ENCODE measurements at regions of chr2 and their contacts with region 1.

Region 1: GRCh38 chr2:147937744-147938349 is 82.7 kb downstream of the ORC4 start:
- DNase-seq: no peak
- ATAC-seq: peak in 1 of 2 donors; percentile 64
- H3K4me3 ChIP-seq: no peak overlapping the region
- H3K27ac ChIP-seq: no peak overlapping the region
- H3K4me1 ChIP-seq: peaks cover 1 to 3% of the 10 kb centered on the region in 2 donors
- H3K27me3 ChIP-seq: no peaks in the 10 kb centered on the region
- CTCF ChIP-seq: peak; percentile 73 to 89 (median 80)
- POLR2A ChIP-seq: no peak

Region 2: DNA sequence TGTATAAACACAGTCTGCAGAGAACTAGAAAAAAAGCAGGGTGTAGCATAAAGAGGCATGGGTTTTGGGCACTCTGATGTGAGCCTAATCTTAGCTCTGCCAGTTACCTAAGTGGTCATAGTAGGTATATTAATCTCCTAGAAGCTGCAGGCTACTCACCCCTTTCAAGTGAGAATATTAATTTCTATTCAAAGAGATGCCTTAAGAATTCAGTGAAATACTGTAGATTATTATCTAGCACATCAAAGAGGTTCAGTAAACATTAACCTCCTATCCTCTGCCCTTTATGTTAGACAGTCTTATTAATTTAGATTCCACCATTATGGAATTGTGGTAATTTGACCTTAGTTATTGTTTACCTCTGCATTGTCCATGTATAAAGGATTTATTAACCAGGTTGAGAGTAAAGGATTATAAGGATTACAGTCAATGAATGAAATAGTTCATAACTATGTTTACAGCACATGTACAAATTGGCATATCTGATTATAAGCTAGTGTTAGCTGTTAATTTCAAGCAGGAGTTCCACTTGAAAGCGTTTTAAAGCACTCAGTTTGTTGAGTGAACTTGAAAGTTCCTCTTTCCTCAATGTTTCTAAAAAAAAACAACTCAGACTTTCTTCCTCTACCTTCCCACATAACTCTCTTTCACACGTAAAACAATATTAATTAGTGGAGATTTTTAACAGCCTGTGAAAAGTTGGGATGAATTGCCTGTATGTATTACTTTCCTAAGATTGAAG is 556.1 kb after region 1 on chr2:
- in situ Hi-C with region 1: loop called in 1 of 4 experiments (anchors 10 kb)
- intact Hi-C with region 1: no loop called
- DNase-seq: no peak
- ATAC-seq: no peak
- H3K4me3 ChIP-seq: no peak overlapping the region
- H3K27ac ChIP-seq: no peak overlapping the region
- H3K4me1 ChIP-seq: no peaks in the 10 kb centered on the region
- H3K27me3 ChIP-seq: no peaks in the 10 kb centered on the region
- CTCF ChIP-seq: no peak
- POLR2A ChIP-seq: no peak

Region 3: GRCh38 chr2:148509288-148509902 is 571.5 kb after region 1 on chr2:
- in situ Hi-C with region 1: loop called in 2 of 4 experiments (anchors 5 to 10 kb)
- intact Hi-C with region 1: loop called (anchors 1 kb)
- DNase-seq: peak; percentile 56 to 78
- ATAC-seq: peak; percentile 94 to 99
- H3K4me3 ChIP-seq: peak overlapping the region; percentile 41 to 49 (median 44)
- H3K27ac ChIP-seq: no peak overlapping the region
- H3K4me1 ChIP-seq: peaks cover 0 to 4% of the 10 kb centered on the region in 2 donors
- H3K27me3 ChIP-seq: no peaks in the 10 kb centered on the region
- CTCF ChIP-seq: peak; percentile 64 to 90 (median 78)
- POLR2A ChIP-seq: no peak

Region 4: DNA sequence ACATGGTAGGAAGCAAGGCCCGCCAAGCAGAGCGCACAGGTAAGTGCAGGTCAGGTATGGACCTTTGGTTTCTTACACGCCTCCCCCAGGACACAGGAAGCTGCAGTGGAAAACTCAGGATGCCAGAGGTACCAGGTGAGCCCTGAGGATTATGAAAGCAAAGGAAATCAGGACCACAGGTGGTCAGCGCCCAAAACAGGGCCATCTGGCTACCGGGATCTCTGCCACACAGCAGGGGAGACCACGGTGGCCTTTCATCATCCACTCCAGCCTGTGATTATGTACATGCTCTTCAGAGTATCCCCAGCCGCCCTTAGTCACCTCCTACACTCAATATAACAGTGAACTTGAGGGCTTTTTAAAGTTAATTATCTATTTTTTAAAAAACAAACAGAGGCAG is 581.2 kb after region 1 on chr2:
- in situ Hi-C with region 1: loop called in 2 of 4 experiments (anchors 5 to 10 kb)
- intact Hi-C with region 1: no loop called
- DNase-seq: no peak
- ATAC-seq: no peak
- H3K4me3 ChIP-seq: no peak overlapping the region
- H3K27ac ChIP-seq: no peak overlapping the region
- H3K4me1 ChIP-seq: no peaks in the 10 kb centered on the region
- H3K27me3 ChIP-seq: no peaks in the 10 kb centered on the region
- CTCF ChIP-seq: no peak
- POLR2A ChIP-seq: no peak

Region 5: GRCh38 chr2:148989882-148990493 is 1052.1 kb after region 1 on chr2:
- in situ Hi-C with region 1: loop called (anchors 25 kb)
- intact Hi-C with region 1: loop called (anchors 1 kb)
- DNase-seq: peak; percentile 26 to 30
- ATAC-seq: peak; percentile 68 to 73
- H3K4me3 ChIP-seq: no peak overlapping the region
- H3K27ac ChIP-seq: no peak overlapping the region
- H3K4me1 ChIP-seq: no peaks in the 10 kb centered on the region
- H3K27me3 ChIP-seq: no peaks in the 10 kb centered on the region
- CTCF ChIP-seq: peak; percentile 33 to 62 (median 61)
- POLR2A ChIP-seq: no peak

Measured in gastrocnemius medialis (tissue), 4 donors.